ENCODE measurements at regions of chr13 and their contacts with region 1.

Region 1: DNA sequence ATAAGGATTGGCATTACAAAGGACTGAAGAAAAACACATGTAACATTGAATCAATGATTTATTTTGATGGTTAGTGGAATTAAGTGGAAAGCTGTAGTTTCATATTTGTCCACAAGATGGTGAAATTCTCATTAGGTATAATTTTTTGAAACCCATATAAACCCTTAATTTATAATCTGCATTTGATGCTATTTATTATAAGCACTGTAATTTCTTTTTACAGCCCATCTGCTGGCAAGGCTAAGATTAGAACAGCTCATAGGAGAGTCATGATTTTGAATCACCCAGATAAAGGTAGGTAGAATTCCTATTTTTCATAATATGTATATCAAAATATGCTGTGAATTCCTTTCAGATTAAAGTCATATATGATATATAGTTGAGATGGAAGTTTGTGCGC is 62.2 kb downstream of the DNAJC15 start:
- DNase-seq: peak; percentile 46
- H3K4me3 Mint-ChIP-seq: no peak overlapping the region
- H3K27ac Mint-ChIP-seq: no peak overlapping the region
- H3K4me1 Mint-ChIP-seq: peaks cover 16% of the 10 kb centered on the region
- H3K27me3 Mint-ChIP-seq: no peaks in the 10 kb centered on the region
- CTCF ChIP-seq: peak; percentile 32

Region 2: GRCh38 chr13:43786773-43787517 is 701.4 kb after region 1 on chr13 and contains the start of gene ENOX1:
- CTCF ChIA-PET with region 1: interaction called, 6 read pairs
- POLR2A ChIA-PET with region 1: no interaction called
- intact Hi-C with region 1: loop called (anchors 1 kb)
- DNase-seq: peak; percentile 60
- H3K4me3 Mint-ChIP-seq: peak within 1 kb of the TSS; percentile 80
- H3K27ac Mint-ChIP-seq: peak within 1 kb of the TSS; percentile 23
- H3K4me1 Mint-ChIP-seq: peaks cover 20% of the 10 kb centered on the region
- H3K27me3 Mint-ChIP-seq: no peaks in the 10 kb centered on the region
- CTCF ChIP-seq: peak; percentile 12
- total RNA-seq, gene ENOX1: 1.5 and 1.8 TPM in 2 replicates